OCI-LY7 (cell line): ENCODE measurements at regions of chr5 and their contacts with region 1.

Region 1: GRCh38 chr5:138065102-138065501 is 18.7 kb upstream of the WNT8A start:
- DNase-seq: no peak
- H3K4me3 ChIP-seq: no peak overlapping the region
- H3K27ac ChIP-seq: no peak overlapping the region
- H3K4me1 ChIP-seq: no peaks in the 10 kb centered on the region
- CTCF ChIP-seq: peak; percentile 74

Region 2: GRCh38 chr5:137629646-137630045 is 435.5 kb before region 1 on chr5:
- CTCF ChIA-PET with region 1: no interaction called
- POLR2A ChIA-PET with region 1: no interaction called
- intact Hi-C with region 1: loop called (anchors 5 kb)
- DNase-seq: peak; percentile 68
- H3K4me3 ChIP-seq: no peak overlapping the region
- H3K27ac ChIP-seq: no peak overlapping the region
- H3K4me1 ChIP-seq: no peaks in the 10 kb centered on the region
- CTCF ChIP-seq: peak; percentile 91

Region 3: GRCh38 chr5:137778772-137779564 is 286.1 kb before region 1 on chr5:
- CTCF ChIA-PET with region 1: no interaction called
- POLR2A ChIA-PET with region 1: no interaction called
- intact Hi-C with region 1: loop called (anchors 2 kb)
- DNase-seq: peak; percentile 51
- H3K4me3 ChIP-seq: no peak overlapping the region
- H3K27ac ChIP-seq: no peak overlapping the region
- H3K4me1 ChIP-seq: no peaks in the 10 kb centered on the region
- CTCF ChIP-seq: peak; percentile 88

Region 4: DNA sequence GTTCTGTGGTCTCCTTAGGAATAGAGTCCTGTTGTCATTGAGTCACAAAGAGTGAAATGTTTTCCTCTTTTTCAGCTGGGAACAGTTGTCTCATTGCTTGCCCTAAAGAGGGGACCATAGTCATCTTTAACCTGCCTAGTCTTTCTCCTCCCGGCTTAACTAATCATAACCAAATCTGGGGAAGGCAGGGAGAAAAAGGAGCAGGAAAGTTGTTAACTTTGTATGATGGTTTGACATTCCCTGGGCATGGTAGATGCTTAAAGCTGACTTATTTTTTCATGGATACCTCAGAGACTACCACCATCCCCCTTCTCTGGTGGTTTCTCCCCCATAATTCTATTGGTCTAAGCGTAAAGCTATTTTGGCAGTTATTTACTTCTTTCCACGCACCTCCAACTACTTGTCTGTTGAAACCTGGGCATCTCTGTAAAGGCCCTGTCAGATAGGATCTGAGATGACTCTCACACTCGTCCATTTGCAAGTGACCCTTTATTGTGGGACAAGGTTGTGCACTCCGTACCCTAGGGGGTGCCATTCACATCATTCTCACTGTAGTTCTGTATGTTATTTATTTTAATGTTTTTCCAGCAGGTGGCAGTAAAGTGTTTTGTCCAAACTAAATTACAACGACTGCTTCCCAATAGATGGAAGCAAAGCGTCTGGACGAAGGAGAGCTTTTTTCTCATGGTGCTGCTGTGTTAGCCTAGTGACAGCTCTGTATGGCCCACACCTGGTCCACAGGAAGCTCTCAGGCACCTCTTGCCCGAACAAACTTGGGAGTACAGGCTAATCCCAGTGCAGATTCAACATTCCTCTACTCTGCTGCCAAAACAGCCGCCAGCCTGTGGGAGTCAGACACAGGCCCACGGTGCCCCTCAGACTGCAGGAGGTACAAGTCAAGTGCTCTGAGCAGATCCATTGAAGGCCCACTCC is 29.2 kb before region 1 on chr5:
- CTCF ChIA-PET with region 1: interaction called, 4 read pairs
- POLR2A ChIA-PET with region 1: interaction called, 4 read pairs
- intact Hi-C with region 1: loop called (anchors 1 kb)
- DNase-seq: peak; percentile 90
- H3K4me3 ChIP-seq: no peak overlapping the region
- H3K27ac ChIP-seq: no peak overlapping the region
- H3K4me1 ChIP-seq: peaks cover 38% of the 10 kb centered on the region
- CTCF ChIP-seq: peak; percentile 99